ENCODE measurements at regions of chr18 and their contacts with region 1.

Region 1: DNA sequence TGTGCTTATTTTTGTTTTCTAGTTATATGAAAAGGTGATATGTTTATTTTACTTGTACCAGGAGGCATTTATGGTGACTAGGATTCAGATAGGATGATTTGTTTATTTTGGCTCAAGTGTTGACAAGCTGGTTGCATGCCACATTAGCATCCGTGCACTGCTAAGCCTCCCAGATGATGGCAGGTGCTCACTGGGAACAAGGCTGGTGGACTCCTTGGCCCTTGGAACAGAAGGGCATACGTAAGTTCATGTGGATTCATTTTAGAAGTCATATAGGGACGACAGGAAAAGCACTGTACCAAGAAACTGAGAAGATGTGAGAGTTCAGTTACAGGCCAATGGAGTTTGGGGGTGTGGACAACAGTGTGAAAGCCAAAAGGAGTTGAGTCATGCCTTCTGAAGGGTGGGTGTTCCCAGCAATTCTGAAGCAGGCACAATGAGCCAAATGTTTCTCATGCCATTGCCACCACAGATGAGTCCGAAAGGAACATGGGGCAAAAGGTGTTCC is 166.2 kb downstream of the PHLPP1 start:
- DNase-seq: no peak
- H3K4me3 ChIP-seq: no peak overlapping the region
- H3K4me3 Mint-ChIP-seq: no peak overlapping the region
- H3K27ac Mint-ChIP-seq: no peak overlapping the region
- H3K4me1 ChIP-seq: peaks cover 29% of the 10 kb centered on the region
- H3K4me1 Mint-ChIP-seq: peaks cover 22% of the 10 kb centered on the region
- H3K27me3 ChIP-seq: no peaks in the 10 kb centered on the region
- H3K27me3 Mint-ChIP-seq: no peaks in the 10 kb centered on the region
- CTCF ChIP-seq: no peak

Region 2: GRCh38 chr18:62790871-62791772 is 90.4 kb before region 1 on chr18:
- CTCF ChIA-PET with region 1: no interaction called
- POLR2A ChIA-PET with region 1: no interaction called
- intact Hi-C with region 1: no loop called
- DNase-seq: no peak
- H3K4me3 ChIP-seq: no peak overlapping the region
- H3K4me3 Mint-ChIP-seq: no peak overlapping the region
- H3K27ac Mint-ChIP-seq: no peak overlapping the region
- H3K4me1 ChIP-seq: peaks cover 15% of the 10 kb centered on the region
- H3K4me1 Mint-ChIP-seq: peaks cover 26% of the 10 kb centered on the region
- H3K27me3 ChIP-seq: no peaks in the 10 kb centered on the region
- H3K27me3 Mint-ChIP-seq: no peaks in the 10 kb centered on the region
- CTCF ChIP-seq: no peak

Region 3: GRCh38 chr18:62814132-62814759 is 67.3 kb before region 1 on chr18:
- CTCF ChIA-PET with region 1: no interaction called
- POLR2A ChIA-PET with region 1: no interaction called
- intact Hi-C with region 1: loop called (anchors 5 kb)
- DNase-seq: no peak
- H3K4me3 ChIP-seq: no peak overlapping the region
- H3K4me3 Mint-ChIP-seq: no peak overlapping the region
- H3K27ac Mint-ChIP-seq: peak overlapping the region; percentile 53
- H3K4me1 ChIP-seq: peaks cover 57% of the 10 kb centered on the region
- H3K4me1 Mint-ChIP-seq: peaks cover 12% of the 10 kb centered on the region
- H3K27me3 ChIP-seq: no peaks in the 10 kb centered on the region
- H3K27me3 Mint-ChIP-seq: no peaks in the 10 kb centered on the region
- CTCF ChIP-seq: no peak

Region 4: GRCh38 chr18:63040788-63041410 is 159.3 kb after region 1 on chr18:
- CTCF ChIA-PET with region 1: no interaction called
- POLR2A ChIA-PET with region 1: no interaction called
- intact Hi-C with region 1: no loop called
- DNase-seq: no peak
- H3K4me3 ChIP-seq: no peak overlapping the region
- H3K4me3 Mint-ChIP-seq: no peak overlapping the region
- H3K27ac Mint-ChIP-seq: no peak overlapping the region
- H3K4me1 ChIP-seq: no peaks in the 10 kb centered on the region
- H3K4me1 Mint-ChIP-seq: no peaks in the 10 kb centered on the region
- H3K27me3 ChIP-seq: no peaks in the 10 kb centered on the region
- H3K27me3 Mint-ChIP-seq: no peaks in the 10 kb centered on the region
- CTCF ChIP-seq: no peak